ENCODE measurements at regions of chr2 and their contacts with region 1.

Region 1: GRCh38 chr2:191677646-191678436 is at the start of gene NABP1:
- DNase-seq: peak; percentile 98
- ATAC-seq: peak; percentile 96
- H3K4me3 Mint-ChIP-seq: peak within 1 kb of the TSS; percentile 96
- H3K27ac Mint-ChIP-seq: peak within 1 kb of the TSS; percentile 82
- H3K4me1 Mint-ChIP-seq: peaks cover 17% of the 10 kb centered on the region
- H3K27me3 Mint-ChIP-seq: peaks cover 21% of the 10 kb centered on the region
- CTCF ChIP-seq: no peak
- total RNA-seq, gene NABP1: 5.2 to 6.3 TPM (median 5.8 TPM) in 3 replicates

Region 2: GRCh38 chr2:191436368-191437055 is 241.3 kb before region 1 on chr2:
- CTCF ChIA-PET with region 1: no interaction called
- POLR2A ChIA-PET with region 1: no interaction called
- DNase-seq: no peak
- ATAC-seq: no peak
- H3K4me3 Mint-ChIP-seq: no peak overlapping the region
- H3K27ac Mint-ChIP-seq: no peak overlapping the region; the same call in 1 of the 2 replicates
- H3K4me1 Mint-ChIP-seq: no peaks in the 10 kb centered on the region
- H3K27me3 Mint-ChIP-seq: no peaks in the 10 kb centered on the region
- CTCF ChIP-seq: no peak

Region 3: GRCh38 chr2:191578036-191578435 is 99.8 kb before region 1 on chr2:
- CTCF ChIA-PET with region 1: no interaction called
- POLR2A ChIA-PET with region 1: no interaction called
- DNase-seq: no peak
- ATAC-seq: no peak
- H3K4me3 Mint-ChIP-seq: no peak overlapping the region
- H3K27ac Mint-ChIP-seq: no peak overlapping the region
- H3K4me1 Mint-ChIP-seq: peaks cover 11% of the 10 kb centered on the region
- H3K27me3 Mint-ChIP-seq: no peaks in the 10 kb centered on the region
- CTCF ChIP-seq: no peak

Region 4: GRCh38 chr2:191758518-191759507 is 81.0 kb after region 1 on chr2:
- CTCF ChIA-PET with region 1: interaction called, 10 read pairs
- POLR2A ChIA-PET with region 1: no interaction called
- DNase-seq: peak; percentile 66
- ATAC-seq: peak; percentile 100
- H3K4me3 Mint-ChIP-seq: no peak overlapping the region
- H3K27ac Mint-ChIP-seq: peak overlapping the region; percentile 24; the same call in 1 of the 2 replicates
- H3K4me1 Mint-ChIP-seq: peaks cover 24% of the 10 kb centered on the region
- H3K27me3 Mint-ChIP-seq: no peaks in the 10 kb centered on the region
- CTCF ChIP-seq: peak; percentile 57